Left cardiac atrium (tissue), 4 donors: ENCODE measurements at regions of chr1 and their contacts with region 1.

Region 1: DNA sequence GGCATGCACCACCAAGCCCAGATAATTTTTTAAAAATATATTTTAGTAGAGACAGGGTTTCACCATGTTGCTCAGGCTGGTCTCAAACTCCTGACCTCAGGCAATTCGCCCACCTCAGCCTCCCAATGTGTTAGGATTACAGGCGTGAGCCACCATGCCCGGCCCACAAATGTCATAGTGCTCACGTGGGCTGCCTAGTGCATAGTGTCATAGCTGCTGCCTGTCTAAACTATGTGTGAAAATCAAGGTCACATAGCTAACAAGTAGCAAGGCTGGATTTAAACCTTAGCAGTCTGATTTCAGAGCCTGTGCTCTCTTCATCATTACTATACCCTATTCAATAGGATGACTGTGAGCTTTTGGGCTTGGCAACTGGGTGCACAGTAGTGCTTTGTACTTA is 10.3 kb downstream of the C1orf141 start:
- DNase-seq: no peak
- ATAC-seq: no peak

Region 2: GRCh38 chr1:67077593-67077992 is 46.9 kb before region 1 on chr1:
- intact Hi-C with region 1: loop called in 1 of 2 experiments (anchors 5 kb)
- DNase-seq: no peak
- ATAC-seq: no peak